ENCODE measurements at regions of chr10 and their contacts with region 1.

Region 1: DNA sequence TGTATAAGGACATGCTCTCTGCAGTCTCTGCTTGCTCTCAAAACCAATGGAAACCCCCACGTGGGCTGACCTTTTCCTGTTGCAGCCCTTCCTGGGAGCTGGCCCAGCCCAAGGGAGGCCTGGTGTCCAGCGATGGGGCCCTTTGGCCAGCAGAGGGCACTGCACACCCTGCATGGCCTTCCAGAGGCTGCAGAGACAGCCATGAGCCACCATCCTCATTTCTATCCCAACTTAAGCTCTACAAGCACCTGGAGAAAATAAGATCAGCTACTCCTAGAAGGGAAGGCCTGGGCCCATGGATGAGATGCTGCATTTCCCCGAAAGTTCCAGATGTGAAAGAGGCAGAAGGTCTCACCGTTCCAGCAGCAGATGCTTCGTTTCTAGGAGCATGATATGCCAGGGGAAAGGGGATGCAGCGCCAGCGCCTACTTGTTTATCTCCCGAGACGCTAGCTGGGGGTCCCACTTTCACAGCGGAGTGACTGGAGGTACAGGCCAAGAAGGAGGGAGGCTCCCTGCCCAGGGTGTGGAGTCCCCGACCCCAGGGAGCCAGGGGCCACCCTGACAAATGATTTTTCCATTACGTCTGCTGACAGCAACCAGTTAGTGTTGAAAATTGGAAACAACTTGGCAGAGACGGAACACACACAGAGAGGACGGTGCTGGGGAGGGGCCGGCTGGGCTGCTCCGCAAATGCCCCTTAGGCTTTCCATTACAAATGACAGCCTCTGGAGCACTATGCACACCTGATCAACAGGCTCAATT is 106.4 kb downstream of the ZRANB1 start:
- DNase-seq: peak; percentile 95
- ATAC-seq: peak; percentile 88
- H3K4me3 Mint-ChIP-seq: peak overlapping the region; percentile 3; the same call in 1 of the 2 replicates
- H3K27ac Mint-ChIP-seq: peak overlapping the region; percentile 94
- H3K4me1 Mint-ChIP-seq: peaks cover 93% of the 10 kb centered on the region
- H3K27me3 Mint-ChIP-seq: no peaks in the 10 kb centered on the region
- CTCF ChIP-seq: peak; percentile 86

Region 2: DNA sequence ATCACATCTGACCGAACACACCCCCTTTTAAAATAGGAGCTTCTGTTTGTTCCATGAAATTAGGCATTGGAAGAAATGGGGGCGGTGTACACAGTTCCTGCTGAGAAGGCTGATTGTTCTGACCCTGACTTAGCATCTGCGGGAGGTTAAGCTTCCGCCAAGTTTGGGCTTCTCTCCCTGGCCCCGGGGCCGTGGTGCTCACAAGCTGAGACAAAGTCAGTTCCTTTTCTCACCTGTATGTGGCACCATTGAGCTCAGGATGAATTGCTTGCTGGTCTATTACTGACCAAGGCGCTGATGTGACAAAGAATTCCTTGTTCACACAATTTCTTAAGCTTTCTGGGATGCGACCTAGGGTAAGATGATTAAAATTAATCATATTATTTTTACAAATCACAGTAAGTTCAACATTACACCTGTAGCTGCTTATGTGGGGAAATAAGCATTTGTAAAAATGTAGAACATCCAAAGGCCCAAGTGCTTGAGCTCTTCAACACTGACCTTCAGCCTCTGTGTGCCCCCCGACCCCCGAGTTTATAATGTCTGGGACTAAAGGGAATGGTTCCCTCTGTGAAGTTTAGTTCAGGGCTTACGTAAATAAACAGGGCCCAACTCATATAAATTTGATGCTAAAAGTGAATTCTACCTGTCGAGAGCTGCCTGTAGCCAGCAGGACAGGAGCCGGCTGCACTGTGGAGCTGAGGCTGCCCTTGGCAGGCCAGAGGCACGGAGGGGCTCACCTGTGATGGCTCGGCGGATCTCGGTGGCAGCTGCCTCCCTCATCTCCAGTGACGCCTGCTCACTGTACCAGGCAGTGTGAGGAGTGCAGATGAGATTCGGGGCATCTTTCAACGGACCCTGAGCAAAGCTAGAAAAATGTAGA is 55.6 kb before region 1 on chr10:
- CTCF ChIA-PET with region 1: interaction called, 12 read pairs
- POLR2A ChIA-PET with region 1: no interaction called
- DNase-seq: peak; percentile 67
- ATAC-seq: peak; percentile 72
- H3K4me3 Mint-ChIP-seq: no peak overlapping the region
- H3K27ac Mint-ChIP-seq: peak overlapping the region; percentile 90
- H3K4me1 Mint-ChIP-seq: no peaks in the 10 kb centered on the region
- H3K27me3 Mint-ChIP-seq: no peaks in the 10 kb centered on the region
- CTCF ChIP-seq: peak; percentile 28; the same call in 1 of the 2 replicates

Region 3: GRCh38 chr10:125027871-125028869 is 20.1 kb before region 1 on chr10:
- CTCF ChIA-PET with region 1: interaction called, 10 read pairs
- POLR2A ChIA-PET with region 1: no interaction called
- DNase-seq: no peak
- ATAC-seq: no peak
- H3K4me3 Mint-ChIP-seq: no peak overlapping the region
- H3K27ac Mint-ChIP-seq: peak overlapping the region; percentile 63
- H3K4me1 Mint-ChIP-seq: peaks cover 68% of the 10 kb centered on the region
- H3K27me3 Mint-ChIP-seq: no peaks in the 10 kb centered on the region; the same call in 1 of the 2 replicates
- CTCF ChIP-seq: no peak

Region 4: DNA sequence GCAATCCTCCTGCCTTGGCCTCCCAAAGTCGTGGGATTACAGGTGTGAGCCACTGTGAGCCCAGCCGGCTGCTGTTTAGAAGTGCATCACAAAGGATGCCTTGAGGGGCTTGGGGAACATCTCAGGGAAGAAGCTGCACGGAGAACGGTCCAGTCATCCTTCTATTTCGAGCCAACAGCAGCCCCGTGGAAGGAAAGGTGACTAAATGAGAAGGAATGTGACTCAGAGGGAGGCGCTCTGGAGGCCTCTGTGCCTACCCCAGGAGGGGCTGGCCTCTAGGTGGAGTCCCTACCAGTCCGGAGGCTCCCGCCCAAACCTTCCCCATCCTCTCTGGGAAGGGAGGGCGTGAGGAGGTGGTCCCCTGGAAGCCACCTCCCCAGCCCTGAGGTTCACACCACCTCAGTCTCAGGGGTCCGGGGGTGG is 35.9 kb after region 1 on chr10:
- CTCF ChIA-PET with region 1: interaction called, 12 read pairs
- POLR2A ChIA-PET with region 1: no interaction called
- DNase-seq: no peak
- ATAC-seq: peak; percentile 79
- H3K4me3 Mint-ChIP-seq: no peak overlapping the region
- H3K27ac Mint-ChIP-seq: peak overlapping the region; percentile 30
- H3K4me1 Mint-ChIP-seq: peaks cover 77% of the 10 kb centered on the region
- H3K27me3 Mint-ChIP-seq: no peaks in the 10 kb centered on the region
- CTCF ChIP-seq: no peak

Region 5: DNA sequence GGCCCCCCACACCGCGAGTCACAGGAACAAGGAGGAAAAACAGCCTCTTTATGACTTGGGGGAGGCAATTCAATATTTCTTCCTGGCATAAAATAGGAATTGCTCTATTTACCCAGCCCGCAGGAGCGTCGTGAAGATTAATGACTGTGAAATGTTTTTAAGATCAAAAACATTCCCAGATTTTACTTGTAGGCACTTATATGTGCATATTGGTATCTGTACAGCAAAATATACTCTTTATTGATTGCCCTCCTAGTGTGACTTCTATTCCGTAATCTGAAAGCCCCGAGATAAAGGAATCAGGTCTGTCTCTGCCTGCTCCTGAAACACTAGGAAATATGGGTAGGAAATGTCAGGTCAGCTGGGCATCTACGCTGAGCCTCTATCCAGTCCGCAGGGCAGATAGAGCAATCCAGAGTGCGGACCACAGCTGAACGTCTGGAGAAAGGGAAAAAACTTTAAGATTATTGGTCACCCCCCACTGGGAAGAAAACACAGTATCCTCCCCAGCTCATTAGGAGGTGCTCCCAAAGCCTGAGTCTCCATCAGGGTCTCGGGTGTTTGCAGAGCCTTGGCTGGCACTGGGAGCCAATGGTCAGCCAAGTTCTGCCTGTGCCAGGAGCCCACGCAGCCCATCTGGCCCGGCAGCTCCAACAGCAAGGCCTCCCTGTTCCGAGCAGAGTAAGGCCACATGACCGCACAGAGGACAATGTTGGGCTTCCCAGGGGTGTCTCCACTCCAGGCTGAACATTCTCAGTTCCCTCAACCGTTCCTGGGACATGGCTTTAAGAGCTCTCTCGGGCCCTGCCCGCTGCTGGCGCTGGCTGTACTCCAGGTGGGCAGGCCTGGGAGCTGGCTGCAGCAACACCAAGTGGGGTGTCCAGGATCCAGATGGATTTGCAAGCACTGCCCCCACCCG is 104.4 kb after region 1 on chr10:
- CTCF ChIA-PET with region 1: interaction called, 11 read pairs
- POLR2A ChIA-PET with region 1: no interaction called
- DNase-seq: no peak
- ATAC-seq: peak; percentile 6
- H3K4me3 Mint-ChIP-seq: peak overlapping the region; percentile 96
- H3K27ac Mint-ChIP-seq: peak overlapping the region; percentile 100
- H3K4me1 Mint-ChIP-seq: peaks cover 90% of the 10 kb centered on the region
- H3K27me3 Mint-ChIP-seq: no peaks in the 10 kb centered on the region
- CTCF ChIP-seq: no peak